Activated CD8-positive, alpha-beta T cell treated with anti-CD3 and anti-CD28 coated beads for 36 hours (primary cell): ENCODE measurements at regions of chr7 and their contacts with region 1.

Region 1: DNA sequence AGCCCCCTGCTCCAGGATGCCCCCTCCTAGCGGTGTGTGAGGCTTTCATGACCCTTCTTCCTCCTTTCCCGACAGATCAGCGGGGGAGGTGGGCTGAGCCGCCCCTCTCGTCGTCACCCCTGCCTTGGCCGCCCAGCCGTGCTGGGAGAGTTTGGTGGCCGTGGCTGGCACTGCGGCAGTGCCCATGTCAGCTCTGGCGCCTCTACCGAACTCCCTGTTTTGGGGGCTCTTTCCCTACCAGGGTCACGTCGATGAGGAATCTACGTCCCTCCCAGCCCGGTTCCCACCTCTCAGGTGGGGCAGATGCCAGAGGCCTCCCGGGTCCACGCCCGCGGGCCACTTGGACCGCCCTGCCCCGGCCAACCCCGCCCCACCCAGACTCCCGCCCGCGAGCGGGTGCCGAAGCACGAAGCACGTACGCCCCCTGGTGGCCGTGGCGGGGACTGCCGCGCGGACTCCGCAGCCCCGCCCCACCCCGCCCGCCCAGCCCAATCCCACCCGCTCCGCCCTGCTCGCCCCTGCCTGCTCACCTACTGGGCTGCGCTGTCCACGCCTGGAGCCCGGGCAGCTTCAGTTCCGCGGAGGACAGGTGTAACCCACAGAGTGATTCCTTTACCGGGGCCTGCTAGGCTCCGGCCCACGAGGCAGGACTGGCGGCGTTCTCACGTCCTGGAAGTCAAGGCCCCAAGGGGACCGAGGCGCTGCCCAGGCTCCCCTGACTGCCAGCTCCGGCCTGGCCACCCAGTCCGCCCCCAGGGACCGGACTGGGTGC is 127.1 kb downstream of the UBE2H start:
- DNase-seq: peak; percentile 91
- ATAC-seq: peak; percentile 78
- H3K4me3 Mint-ChIP-seq: peak overlapping the region; percentile 87
- H3K27ac Mint-ChIP-seq: peak overlapping the region; percentile 42
- H3K4me1 Mint-ChIP-seq: peaks cover 16% of the 10 kb centered on the region
- H3K27me3 Mint-ChIP-seq: no peaks in the 10 kb centered on the region
- CTCF ChIP-seq: peak; percentile 94

Region 2: DNA sequence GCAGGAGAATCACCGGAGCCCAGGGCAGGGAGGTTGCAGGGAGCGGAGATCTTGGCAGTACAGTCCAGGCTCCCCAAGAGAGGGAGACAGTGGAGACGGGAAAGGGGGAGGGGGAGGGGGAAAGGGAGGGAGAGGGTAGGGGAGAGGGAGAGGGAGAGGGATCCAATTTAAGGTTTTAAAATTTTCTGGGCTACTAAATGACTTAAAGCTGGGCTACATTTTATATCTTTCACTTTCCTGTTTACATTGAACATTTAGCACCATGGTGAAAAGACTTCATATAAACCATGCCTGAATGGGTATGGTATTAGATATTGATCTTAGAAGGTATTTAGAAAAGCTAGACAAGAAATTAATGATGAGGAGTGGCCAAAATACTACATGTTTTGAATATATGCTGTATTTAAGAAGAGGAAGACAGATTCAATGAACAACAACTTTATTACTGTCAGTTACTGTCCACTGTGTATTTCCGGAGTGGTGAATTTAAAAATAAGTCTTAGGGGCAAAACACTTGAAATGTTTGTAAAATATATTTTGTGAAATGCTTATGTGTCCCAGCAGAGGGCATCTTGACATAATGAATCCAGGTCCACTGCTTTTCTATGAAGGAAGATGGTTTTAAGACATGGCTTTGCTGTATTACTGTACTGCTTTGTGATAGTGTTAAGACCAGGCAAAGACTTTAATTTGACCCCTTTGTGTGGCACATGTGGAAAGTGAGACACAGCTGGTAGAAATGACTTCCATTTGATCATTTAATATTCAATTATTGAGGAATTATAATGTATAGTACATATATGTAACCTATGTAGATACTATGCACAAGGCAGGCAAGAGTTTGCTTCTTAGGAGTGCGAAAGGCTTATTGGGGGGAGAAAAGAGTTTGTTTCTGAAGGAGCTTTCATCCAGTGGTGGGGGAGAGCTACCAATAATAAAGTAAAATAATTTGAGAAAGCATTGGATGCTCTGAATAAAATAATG is 161.4 kb before region 1 on chr7:
- CTCF ChIA-PET with region 1: interaction called, 16 read pairs
- POLR2A ChIA-PET with region 1: no interaction called
- intact Hi-C with region 1: loop called (anchors 1 kb)
- DNase-seq: no peak
- ATAC-seq: peak; percentile 45
- H3K4me3 Mint-ChIP-seq: no peak overlapping the region
- H3K27ac Mint-ChIP-seq: no peak overlapping the region
- H3K4me1 Mint-ChIP-seq: peaks cover 7% of the 10 kb centered on the region
- H3K27me3 Mint-ChIP-seq: no peaks in the 10 kb centered on the region
- CTCF ChIP-seq: peak; percentile 45

Region 3: GRCh38 chr7:129780257-129780973 is 45.3 kb before region 1 on chr7:
- CTCF ChIA-PET with region 1: interaction called, 11 read pairs
- POLR2A ChIA-PET with region 1: interaction called, 3 read pairs
- intact Hi-C with region 1: no loop called
- DNase-seq: peak; percentile 91
- ATAC-seq: peak; percentile 86
- H3K4me3 Mint-ChIP-seq: peak overlapping the region; percentile 64
- H3K27ac Mint-ChIP-seq: no peak overlapping the region
- H3K4me1 Mint-ChIP-seq: peaks cover 31% of the 10 kb centered on the region
- H3K27me3 Mint-ChIP-seq: peaks cover 58% of the 10 kb centered on the region
- CTCF ChIP-seq: no peak

Region 4: GRCh38 chr7:129845178-129845971 is 19.7 kb after region 1 on chr7:
- CTCF ChIA-PET with region 1: interaction called, 17 read pairs
- POLR2A ChIA-PET with region 1: interaction called, 3 read pairs
- intact Hi-C with region 1: no loop called
- DNase-seq: no peak
- ATAC-seq: no peak
- H3K4me3 Mint-ChIP-seq: no peak overlapping the region
- H3K27ac Mint-ChIP-seq: peak overlapping the region; percentile 12
- H3K4me1 Mint-ChIP-seq: peaks cover 50% of the 10 kb centered on the region
- H3K27me3 Mint-ChIP-seq: no peaks in the 10 kb centered on the region
- CTCF ChIP-seq: no peak

Region 5: GRCh38 chr7:130010689-130011412 is 185.2 kb after region 1 on chr7:
- CTCF ChIA-PET with region 1: interaction called, 41 read pairs
- POLR2A ChIA-PET with region 1: no interaction called
- intact Hi-C with region 1: loop called (anchors 5 kb)
- DNase-seq: peak; percentile 97
- ATAC-seq: peak; percentile 93
- H3K4me3 Mint-ChIP-seq: no peak overlapping the region
- H3K27ac Mint-ChIP-seq: peak overlapping the region; percentile 51
- H3K4me1 Mint-ChIP-seq: peaks cover 10% of the 10 kb centered on the region
- H3K27me3 Mint-ChIP-seq: no peaks in the 10 kb centered on the region
- CTCF ChIP-seq: peak; percentile 81

Region 6: GRCh38 chr7:130409067-130409713 is 583.5 kb after region 1 on chr7:
- CTCF ChIA-PET with region 1: no interaction called
- POLR2A ChIA-PET with region 1: no interaction called
- intact Hi-C with region 1: no loop called
- DNase-seq: no peak
- ATAC-seq: no peak
- H3K4me3 Mint-ChIP-seq: no peak overlapping the region
- H3K27ac Mint-ChIP-seq: no peak overlapping the region
- H3K4me1 Mint-ChIP-seq: peaks cover 38% of the 10 kb centered on the region
- H3K27me3 Mint-ChIP-seq: no peaks in the 10 kb centered on the region
- CTCF ChIP-seq: no peak